PC-9 (cell line): ENCODE measurements at regions of chr3 and their contacts with region 1.

Region 1: GRCh38 chr3:184250167-184250828 is 826 bp downstream of the EEF1AKMT4 start:
- DNase-seq: peak; percentile 92 to 97
- H3K4me3 ChIP-seq: peak overlapping the region; percentile 96
- H3K27ac ChIP-seq: peak overlapping the region; percentile 90
- H3K4me1 ChIP-seq: peaks cover 18% of the 10 kb centered on the region
- H3K27me3 ChIP-seq: no peaks in the 10 kb centered on the region
- CTCF ChIP-seq: peak; percentile 97

Region 2: GRCh38 chr3:183966251-183966801 is 284.0 kb before region 1 on chr3:
- CTCF ChIA-PET with region 1: interaction called, 16 read pairs
- POLR2A ChIA-PET with region 1: no interaction called
- intact Hi-C with region 1: no loop called
- DNase-seq: peak; percentile 83 to 98
- H3K4me3 ChIP-seq: peak overlapping the region; percentile 27
- H3K27ac ChIP-seq: peak overlapping the region; percentile 99
- H3K4me1 ChIP-seq: peaks cover 72% of the 10 kb centered on the region
- H3K27me3 ChIP-seq: no peaks in the 10 kb centered on the region
- CTCF ChIP-seq: no peak

Region 3: GRCh38 chr3:184218814-184219213 is 31.5 kb before region 1 on chr3:
- CTCF ChIA-PET with region 1: interaction called, 14 read pairs
- POLR2A ChIA-PET with region 1: no interaction called
- intact Hi-C with region 1: no loop called
- DNase-seq: no peak
- H3K4me3 ChIP-seq: no peak overlapping the region
- H3K27ac ChIP-seq: no peak overlapping the region
- H3K4me1 ChIP-seq: no peaks in the 10 kb centered on the region
- H3K27me3 ChIP-seq: 0 out of 2 replicates have a peak, but pooled peaks cover 4% of the 10 kb centered on the region
- CTCF ChIP-seq: no peak

Region 4: DNA sequence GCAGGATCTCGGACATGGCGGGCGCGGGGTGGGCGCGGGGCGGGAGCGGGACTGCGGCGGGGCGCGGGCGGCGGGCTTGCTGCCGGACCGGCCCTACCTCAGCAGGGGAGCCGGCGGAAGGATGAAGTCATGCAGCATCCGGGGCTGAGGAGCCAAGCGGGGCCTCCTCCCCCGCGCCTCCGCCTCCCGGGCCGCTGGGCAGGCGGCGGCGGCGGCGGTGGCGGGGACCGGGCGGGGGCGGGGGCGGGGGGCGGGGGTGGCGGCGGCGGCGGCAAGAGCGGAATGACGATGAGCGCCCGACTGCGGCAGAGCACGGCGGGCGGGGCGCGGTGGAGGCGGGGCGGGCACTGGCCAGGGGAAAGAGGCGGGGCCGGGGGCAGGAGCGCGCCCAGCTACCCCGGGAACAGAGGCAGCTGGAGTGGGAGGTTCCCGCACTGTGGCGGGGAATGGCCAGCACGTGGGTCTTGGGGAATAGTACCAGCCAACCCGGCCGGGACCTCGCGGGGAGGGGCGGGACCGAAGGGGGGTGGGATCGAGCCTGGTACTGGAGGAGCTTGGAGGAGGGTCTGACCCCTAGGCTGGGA is 11.1 kb after region 1 on chr3 and contains the start of gene CAMK2N2:
- CTCF ChIA-PET with region 1: interaction called, 10 read pairs
- POLR2A ChIA-PET with region 1: interaction called, 22 read pairs
- intact Hi-C with region 1: loop called (anchors 1 kb)
- DNase-seq: peak; percentile 78 to 82
- H3K4me3 ChIP-seq: peak within 1 kb of the TSS; percentile 93
- H3K27ac ChIP-seq: no peak within 1 kb of the TSS
- H3K4me1 ChIP-seq: peaks cover 15% of the 10 kb centered on the region; the same call in 1 of the 2 replicates
- H3K27me3 ChIP-seq: no peaks in the 10 kb centered on the region
- CTCF ChIP-seq: no peak
- total RNA-seq, gene CAMK2N2: 2.2 and 2.6 TPM in 2 replicates

Region 5: GRCh38 chr3:184298759-184299496 is 48.6 kb after region 1 on chr3 and contains the start of gene PSMD2:
- CTCF ChIA-PET with region 1: no interaction called
- POLR2A ChIA-PET with region 1: no interaction called
- intact Hi-C with region 1: loop called (anchors 1 kb)
- DNase-seq: peak; percentile 92 to 99
- H3K4me3 ChIP-seq: peak within 1 kb of the TSS; percentile 100
- H3K27ac ChIP-seq: peak within 1 kb of the TSS; percentile 57
- H3K4me1 ChIP-seq: peaks cover 15% of the 10 kb centered on the region
- H3K27me3 ChIP-seq: no peaks in the 10 kb centered on the region
- CTCF ChIP-seq: no peak
- total RNA-seq, gene PSMD2: 521 and 788 TPM in 2 replicates

Region 6: DNA sequence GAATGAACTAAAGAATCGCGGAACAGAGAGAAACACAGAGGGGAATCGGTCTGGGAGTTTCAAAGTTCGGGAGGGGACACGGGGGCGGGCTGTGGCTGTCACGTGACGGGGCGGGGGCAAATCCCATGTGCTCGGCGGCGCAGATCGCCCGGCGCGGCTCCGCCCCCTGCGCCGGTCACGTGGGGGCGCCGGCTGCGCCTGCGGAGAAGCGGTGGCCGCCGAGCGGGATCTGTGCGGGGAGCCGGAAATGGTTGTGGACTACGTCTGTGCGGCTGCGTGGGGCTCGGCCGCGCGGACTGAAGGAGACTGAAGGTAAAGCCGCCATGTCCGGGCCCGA is 64.0 kb after region 1 on chr3 and contains the start of gene EIF4G1:
- CTCF ChIA-PET with region 1: no interaction called
- POLR2A ChIA-PET with region 1: interaction called, 11 read pairs
- intact Hi-C with region 1: no loop called
- DNase-seq: peak; percentile 82 to 98
- H3K4me3 ChIP-seq: peak within 1 kb of the TSS; percentile 63
- H3K27ac ChIP-seq: peak within 1 kb of the TSS; percentile 84
- H3K4me1 ChIP-seq: peaks cover 43% of the 10 kb centered on the region
- H3K27me3 ChIP-seq: no peaks in the 10 kb centered on the region
- CTCF ChIP-seq: no peak
- total RNA-seq, gene EIF4G1: 657 and 721 TPM in 2 replicates

Region 7: DNA sequence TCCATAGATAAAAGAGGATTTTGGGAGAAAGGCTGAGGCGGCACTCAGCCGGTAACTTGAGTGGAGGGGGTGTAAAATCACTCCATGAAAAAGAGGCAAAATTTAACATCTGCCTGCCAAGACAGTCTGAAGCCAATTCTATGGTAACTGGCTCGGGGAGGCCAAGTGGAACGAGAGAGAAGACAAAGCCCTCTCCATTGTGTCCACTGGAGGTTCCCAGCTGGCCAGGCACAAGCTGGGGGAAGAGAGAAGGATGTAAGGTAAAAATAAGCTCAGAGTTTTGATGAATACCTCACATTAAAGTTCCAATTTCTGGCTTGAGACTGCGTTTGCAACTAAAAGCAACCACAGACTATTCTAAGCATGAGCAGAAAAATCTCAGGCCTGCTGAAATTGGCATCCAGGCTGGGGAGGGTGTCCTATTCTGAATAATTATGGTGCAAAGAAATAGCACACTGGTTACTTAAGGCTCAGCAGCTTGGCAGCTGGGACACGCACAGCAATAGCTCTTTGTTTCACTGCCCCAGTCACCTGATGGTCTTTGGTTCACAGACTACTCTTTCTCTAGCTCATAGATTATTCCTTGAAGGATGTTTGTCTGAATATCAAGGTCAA is 178.4 kb after region 1 on chr3:
- CTCF ChIA-PET with region 1: no interaction called
- POLR2A ChIA-PET with region 1: no interaction called
- intact Hi-C with region 1: no loop called
- DNase-seq: no peak
- H3K4me3 ChIP-seq: no peak overlapping the region
- H3K27ac ChIP-seq: no peak overlapping the region
- H3K4me1 ChIP-seq: no peaks in the 10 kb centered on the region
- H3K27me3 ChIP-seq: no peaks in the 10 kb centered on the region
- CTCF ChIP-seq: no peak

Region 8: GRCh38 chr3:184574515-184575417 is 324.5 kb after region 1 on chr3:
- CTCF ChIA-PET with region 1: no interaction called
- POLR2A ChIA-PET with region 1: no interaction called
- intact Hi-C with region 1: no loop called
- DNase-seq: no peak
- H3K4me3 ChIP-seq: no peak overlapping the region
- H3K27ac ChIP-seq: no peak overlapping the region
- H3K4me1 ChIP-seq: peaks cover under 1% of the 10 kb centered on the region; the same call in 1 of the 2 replicates
- H3K27me3 ChIP-seq: peaks cover 6% of the 10 kb centered on the region
- CTCF ChIP-seq: no peak